ENCODE measurements at regions of chr1 and their contacts with region 1.

Region 1: DNA sequence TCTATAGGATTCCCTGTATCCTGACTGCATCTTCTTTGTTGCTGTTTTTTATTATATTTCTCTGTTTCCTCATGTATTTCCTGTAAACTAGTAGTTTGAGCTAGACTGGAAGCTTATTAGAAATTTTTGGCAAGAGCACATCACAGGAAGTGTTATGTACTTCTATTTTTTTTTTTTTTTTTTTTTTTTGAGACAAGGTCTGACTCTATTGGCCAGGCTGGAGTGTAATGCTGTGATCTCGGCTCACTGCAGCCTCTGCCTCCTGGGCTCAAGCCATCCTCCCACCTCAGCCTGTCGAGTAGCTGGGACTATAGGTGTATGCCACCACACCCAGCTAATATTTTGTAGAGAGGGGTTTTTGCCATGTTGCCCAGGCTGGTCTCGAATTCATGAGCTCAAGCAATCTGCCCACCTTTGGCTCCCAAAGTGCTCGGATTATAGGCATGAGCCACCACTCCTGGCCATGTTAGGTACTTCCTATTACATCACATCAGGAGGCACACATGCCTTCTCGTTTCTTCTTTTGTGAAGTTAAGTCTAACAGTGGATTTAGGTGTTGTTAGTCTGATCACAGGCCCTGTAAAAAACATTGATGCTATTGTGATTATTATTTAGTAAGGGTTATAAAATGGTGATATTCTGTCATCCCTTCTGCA is 12.5 kb downstream of the C1orf21 start:
- DNase-seq: no peak
- ATAC-seq: peak; percentile 55 to 71 (median 64)
- H3K4me3 ChIP-seq: no peak overlapping the region
- H3K27ac ChIP-seq: peak overlapping the region; percentile 12
- H3K4me1 ChIP-seq: peaks cover 87% of the 10 kb centered on the region
- H3K27me3 ChIP-seq: no peaks in the 10 kb centered on the region
- CTCF ChIP-seq: no peak

Region 2: GRCh38 chr1:184449916-184450315 is 50.6 kb after region 1 on chr1:
- intact Hi-C with region 1: loop called in 1 of 2 experiments (anchors 10 kb)
- DNase-seq: no peak
- ATAC-seq: peak; percentile 27 to 61 (median 44)
- H3K4me3 ChIP-seq: no peak overlapping the region
- H3K27ac ChIP-seq: peak overlapping the region; percentile 37
- H3K4me1 ChIP-seq: peaks cover 73% of the 10 kb centered on the region
- H3K27me3 ChIP-seq: no peaks in the 10 kb centered on the region
- CTCF ChIP-seq: no peak

Measured in psoas muscle (tissue), 8 donors.